ENCODE measurements at regions of chr1 and their contacts with region 1.

Region 1: GRCh38 chr1:225474986-225475820 is 47.4 kb upstream of the LBR start:
- DNase-seq: peak; percentile 57 to 80 (median 67)
- H3K4me3 ChIP-seq: no peak overlapping the region
- H3K27ac ChIP-seq: no peak overlapping the region
- H3K4me1 ChIP-seq: peaks cover 4 to 8% of the 10 kb centered on the region in 2 donors
- H3K27me3 ChIP-seq: no peaks in the 10 kb centered on the region
- CTCF ChIP-seq: peak; percentile 100
- POLR2A ChIP-seq: peak in 1 of 2 donors; percentile 65

Region 2: DNA sequence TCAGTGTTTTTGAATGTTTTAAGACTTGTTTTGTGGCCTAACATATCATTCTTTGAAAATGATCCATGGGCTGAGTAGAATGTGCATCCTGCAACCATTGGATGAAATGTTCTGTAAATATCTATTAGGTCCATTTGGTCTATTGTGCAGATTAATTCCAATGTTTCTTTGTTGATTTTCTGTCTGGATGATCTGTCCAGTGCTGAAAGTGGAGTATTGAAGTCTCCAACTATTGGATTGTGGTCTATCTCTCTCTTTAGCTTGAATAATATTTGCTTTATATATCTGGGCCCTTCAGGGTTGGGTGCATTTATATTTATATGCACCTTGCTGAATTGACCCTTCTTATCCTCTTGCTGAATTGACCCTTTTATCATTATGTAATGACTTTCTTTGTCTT is 364.2 kb before region 1 on chr1:
- intact Hi-C with region 1: no loop called
- DNase-seq: no peak
- H3K4me3 ChIP-seq: no peak overlapping the region
- H3K27ac ChIP-seq: no peak overlapping the region
- H3K4me1 ChIP-seq: no peaks in the 10 kb centered on the region
- H3K27me3 ChIP-seq: no peaks in the 10 kb centered on the region
- CTCF ChIP-seq: no peak
- POLR2A ChIP-seq: no peak

Region 3: GRCh38 chr1:225258811-225259210 is 216.4 kb before region 1 on chr1:
- intact Hi-C with region 1: no loop called
- DNase-seq: no peak
- H3K4me3 ChIP-seq: no peak overlapping the region
- H3K27ac ChIP-seq: no peak overlapping the region
- H3K4me1 ChIP-seq: no peaks in the 10 kb centered on the region
- H3K27me3 ChIP-seq: no peaks in the 10 kb centered on the region
- CTCF ChIP-seq: no peak
- POLR2A ChIP-seq: no peak

Region 4: DNA sequence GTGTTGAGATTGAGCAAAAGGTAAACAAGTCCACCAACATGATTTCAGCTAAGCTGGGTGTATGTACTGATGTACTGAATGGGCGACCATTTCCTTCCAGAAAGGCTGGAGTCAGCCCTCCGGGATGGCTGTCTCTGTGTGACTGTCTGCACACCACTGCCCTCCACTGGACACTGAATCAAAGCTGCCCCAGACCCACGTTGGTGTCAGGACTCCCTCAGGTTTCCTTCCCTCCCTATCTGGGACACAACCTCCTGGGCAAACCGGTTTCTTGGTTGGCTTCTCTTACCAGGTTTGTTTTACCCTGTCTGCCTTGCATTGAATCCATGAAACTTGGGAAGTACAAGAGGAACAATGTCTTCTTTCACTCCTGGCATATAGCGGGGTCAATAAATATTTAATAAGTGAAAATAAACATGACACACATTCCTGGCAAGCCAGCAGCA is 297.1 kb after region 1 on chr1:
- intact Hi-C with region 1: loop called (anchors 5 kb)
- DNase-seq: peak; percentile 85 to 94 (median 90)
- H3K4me3 ChIP-seq: no peak overlapping the region
- H3K27ac ChIP-seq: peak overlapping the region in 3 of 5 donors; percentile 43 to 65 (median 57)
- H3K4me1 ChIP-seq: peaks cover 9 to 54% of the 10 kb centered on the region in 2 donors
- H3K27me3 ChIP-seq: no peaks in the 10 kb centered on the region
- CTCF ChIP-seq: peak; percentile 58 to 96 (median 90)
- POLR2A ChIP-seq: no peak

Region 5: GRCh38 chr1:225855503-225856300 is 380.5 kb after region 1 on chr1:
- intact Hi-C with region 1: no loop called
- DNase-seq: no peak
- H3K4me3 ChIP-seq: no peak overlapping the region
- H3K27ac ChIP-seq: no peak overlapping the region
- H3K4me1 ChIP-seq: peaks cover 0 to 4% of the 10 kb centered on the region in 2 donors
- H3K27me3 ChIP-seq: no peaks in the 10 kb centered on the region
- CTCF ChIP-seq: peak in 2 of 6 experiments; percentile 10 to 16
- POLR2A ChIP-seq: no peak

Region 6: DNA sequence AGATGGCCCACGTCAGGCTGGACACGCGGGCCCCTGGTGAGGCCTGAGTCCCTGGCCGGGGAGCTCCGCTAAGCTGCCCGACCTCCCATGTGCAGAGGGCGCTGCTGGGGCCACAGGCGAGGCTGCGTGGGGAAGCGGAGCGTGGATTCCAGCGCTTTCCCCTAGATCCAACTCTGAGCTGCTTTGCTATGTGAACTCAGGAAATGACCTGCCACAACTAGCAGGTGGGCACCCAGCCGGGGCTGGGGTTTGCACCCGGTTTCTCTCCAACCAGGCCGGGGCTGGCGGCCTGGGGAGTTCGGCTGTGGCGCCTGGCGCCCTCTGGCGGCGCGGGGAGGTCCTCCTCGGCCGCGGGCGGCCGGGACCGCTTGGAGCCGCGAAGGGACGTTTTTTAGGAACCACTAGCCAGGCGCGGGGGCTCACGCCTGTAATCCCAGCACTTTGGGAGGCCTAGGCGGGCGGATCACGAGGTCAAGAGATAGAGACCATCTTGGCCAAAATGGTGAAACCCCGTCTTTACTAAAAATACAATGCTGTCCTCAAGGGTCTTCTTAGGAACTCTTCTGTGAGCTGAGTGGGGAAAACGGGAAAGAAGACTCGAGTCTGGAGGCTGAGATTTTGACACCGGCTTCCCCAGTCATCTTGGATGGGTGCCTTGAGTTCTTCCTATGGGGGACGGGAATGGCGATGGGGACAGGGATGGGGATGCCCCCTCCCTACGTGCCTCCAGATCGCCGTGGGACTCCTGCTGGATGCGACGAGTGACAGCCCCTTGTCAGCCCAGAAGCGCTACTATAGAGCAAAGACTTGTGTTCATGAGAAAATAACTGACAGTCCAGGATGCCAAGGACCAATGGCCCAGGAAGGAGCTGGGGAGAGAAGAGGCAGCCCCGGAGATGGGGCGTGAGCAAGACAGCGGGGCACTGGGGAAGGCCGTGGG is 436.3 kb after region 1 on chr1:
- intact Hi-C with region 1: loop called (anchors 2 to 5 kb)
- DNase-seq: peak; percentile 53 to 78 (median 69)
- H3K4me3 ChIP-seq: peak overlapping the region in 2 of 4 donors; percentile 13 to 39
- H3K27ac ChIP-seq: no peak overlapping the region
- H3K4me1 ChIP-seq: peaks cover 10 to 12% of the 10 kb centered on the region in 2 donors
- H3K27me3 ChIP-seq: no peaks in the 10 kb centered on the region
- CTCF ChIP-seq: peak; percentile 73 to 96 (median 88)
- POLR2A ChIP-seq: no peak

Region 7: DNA sequence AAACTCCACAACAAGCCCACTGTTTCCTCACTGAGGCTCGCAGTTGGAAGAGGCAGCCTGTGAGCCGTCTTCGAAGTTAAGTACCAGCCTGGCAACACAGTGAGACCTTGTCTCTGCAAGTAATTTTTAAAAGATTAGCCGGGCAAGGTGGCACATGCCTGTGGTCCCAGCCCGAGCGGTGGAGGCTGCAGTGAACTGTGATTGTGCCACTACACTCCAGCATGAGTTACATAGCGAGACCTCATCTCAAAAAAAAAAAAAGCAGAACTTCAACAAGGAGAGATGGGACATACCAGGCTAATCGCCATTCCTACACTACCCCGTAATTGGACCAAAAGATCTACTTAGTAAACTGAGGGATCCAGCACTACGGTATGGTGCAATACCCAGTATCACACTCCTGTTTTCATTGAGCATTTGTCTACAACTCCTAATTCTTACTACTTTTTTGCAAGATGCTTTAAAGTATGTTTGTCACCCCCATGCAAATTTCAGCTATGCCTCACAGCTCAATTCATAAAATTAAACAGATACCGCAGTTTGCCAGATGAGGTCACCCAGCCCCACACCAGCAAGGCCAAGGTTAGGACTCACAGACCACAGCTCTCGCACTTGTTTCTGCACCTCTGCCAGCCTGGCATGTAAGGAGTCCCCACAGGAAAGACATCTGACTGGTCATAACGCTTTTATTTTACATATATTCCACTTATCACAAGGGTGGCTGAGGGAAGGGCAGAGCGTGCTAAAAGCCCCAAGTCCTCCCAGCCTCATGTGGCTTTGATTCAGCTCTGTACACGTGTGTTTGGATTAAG is 502.9 kb after region 1 on chr1:
- intact Hi-C with region 1: loop called (anchors 2 to 5 kb)
- DNase-seq: peak in 5 of 7 donors; percentile 39 to 69 (median 62)
- H3K4me3 ChIP-seq: no peak overlapping the region
- H3K27ac ChIP-seq: no peak overlapping the region
- H3K4me1 ChIP-seq: no peaks in the 10 kb centered on the region
- H3K27me3 ChIP-seq: no peaks in the 10 kb centered on the region
- CTCF ChIP-seq: no peak
- POLR2A ChIP-seq: no peak